GM10248 (cell line): ENCODE measurements at regions of chr2 and their contacts with region 1.

Region 1: GRCh38 chr2:26922405-26923188 is 47.8 kb upstream of the MAPRE3 start:
- DNase-seq: peak; percentile 71
- CTCF ChIP-seq: peak; percentile 44

Region 2: GRCh38 chr2:26905341-26906198 is 17.0 kb before region 1 on chr2:
- CTCF ChIA-PET with region 1: interaction called, 11 read pairs
- POLR2A ChIA-PET with region 1: no interaction called
- DNase-seq: no peak
- CTCF ChIP-seq: no peak

Region 3: DNA sequence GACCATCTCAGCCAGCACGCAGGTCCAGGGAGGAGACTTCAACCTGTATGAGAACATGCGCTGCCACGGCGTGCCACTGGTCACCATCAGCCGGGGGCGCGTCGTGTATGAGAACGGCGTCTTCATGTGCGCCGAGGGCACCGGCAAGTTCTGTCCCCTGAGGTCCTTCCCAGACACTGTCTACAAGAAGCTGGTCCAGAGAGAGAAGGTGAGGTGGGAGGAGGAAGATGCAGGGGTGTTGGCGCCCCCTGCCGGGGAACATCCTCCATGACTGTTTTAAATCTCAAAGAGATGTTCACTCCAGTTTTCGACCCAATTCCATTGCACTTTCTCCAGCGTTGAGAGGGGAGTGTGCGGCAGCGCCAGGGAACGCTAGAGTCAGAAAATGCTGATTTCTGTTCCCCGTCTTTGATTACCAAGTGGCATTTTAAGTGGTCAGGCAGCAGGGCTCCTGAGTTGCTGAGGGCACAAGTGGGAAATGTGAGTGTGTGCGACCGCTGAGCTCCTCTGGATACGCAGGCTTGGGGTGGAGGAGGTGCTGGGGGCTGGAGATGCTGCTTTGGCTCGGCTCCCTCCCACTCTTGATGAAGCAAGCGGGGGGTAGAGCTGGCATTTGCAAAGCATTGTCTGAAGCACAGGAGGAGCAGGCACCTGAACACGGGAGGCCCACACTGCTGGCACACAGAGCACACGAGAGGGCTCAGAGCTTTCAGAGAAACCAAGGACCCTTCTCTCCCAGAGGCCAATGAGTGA is 20.1 kb after region 1 on chr2:
- CTCF ChIA-PET with region 1: interaction called, 15 read pairs
- POLR2A ChIA-PET with region 1: no interaction called
- DNase-seq: peak; percentile 85
- CTCF ChIP-seq: peak; percentile 71